ENCODE measurements at regions of chr11 and their contacts with region 1.

Region 1: DNA sequence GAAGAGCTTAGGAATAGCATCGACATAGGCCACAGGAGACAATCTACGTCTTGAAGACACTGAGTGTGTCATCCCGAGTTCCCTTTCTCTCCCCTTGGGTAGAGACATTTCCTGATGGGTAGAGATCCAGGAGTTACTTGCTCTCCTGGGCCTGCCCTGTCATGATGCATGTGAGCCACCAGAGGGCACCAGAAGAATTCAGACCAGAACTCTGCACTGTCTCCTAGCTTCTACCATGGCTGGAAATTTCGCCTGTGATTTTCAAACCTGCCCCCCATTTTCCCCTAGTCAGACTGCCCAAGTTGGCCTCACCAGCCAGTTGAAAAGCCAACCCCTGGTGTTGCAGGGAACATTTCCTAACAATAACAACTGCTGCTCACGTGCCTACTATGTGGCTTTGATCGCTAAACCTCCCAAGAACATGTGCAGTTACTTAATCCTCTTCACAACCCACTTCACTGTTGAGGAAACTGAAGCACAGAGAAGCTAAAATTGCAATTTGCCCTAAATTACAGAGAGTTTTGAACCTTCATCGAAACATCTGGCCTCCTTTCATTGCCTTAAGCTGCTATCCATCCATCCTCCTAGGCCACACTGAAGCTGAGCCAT is 47.2 kb downstream of the C11orf58 start:
- DNase-seq: peak; percentile 65
- ATAC-seq: peak; percentile 81
- H3K4me3 ChIP-seq: no peak overlapping the region
- H3K4me3 Mint-ChIP-seq: no peak overlapping the region
- H3K27ac ChIP-seq: no peak overlapping the region
- H3K27ac Mint-ChIP-seq: no peak overlapping the region
- H3K4me1 ChIP-seq: no peaks in the 10 kb centered on the region
- H3K4me1 Mint-ChIP-seq: no peaks in the 10 kb centered on the region
- H3K27me3 ChIP-seq: no peaks in the 10 kb centered on the region
- H3K27me3 Mint-ChIP-seq: no peaks in the 10 kb centered on the region
- CTCF ChIP-seq: peak; percentile 89

Region 2: GRCh38 chr11:16767137-16767536 is 18.5 kb before region 1 on chr11:
- CTCF ChIA-PET with region 1: interaction called, 11 read pairs
- POLR2A ChIA-PET with region 1: no interaction called
- intact Hi-C with region 1: no loop called
- DNase-seq: no peak
- ATAC-seq: no peak
- H3K4me3 ChIP-seq: no peak overlapping the region
- H3K4me3 Mint-ChIP-seq: no peak overlapping the region
- H3K27ac ChIP-seq: no peak overlapping the region
- H3K27ac Mint-ChIP-seq: no peak overlapping the region
- H3K4me1 ChIP-seq: no peaks in the 10 kb centered on the region
- H3K4me1 Mint-ChIP-seq: no peaks in the 10 kb centered on the region
- H3K27me3 ChIP-seq: no peaks in the 10 kb centered on the region
- H3K27me3 Mint-ChIP-seq: peaks cover 7% of the 10 kb centered on the region
- CTCF ChIP-seq: no peak

Region 3: DNA sequence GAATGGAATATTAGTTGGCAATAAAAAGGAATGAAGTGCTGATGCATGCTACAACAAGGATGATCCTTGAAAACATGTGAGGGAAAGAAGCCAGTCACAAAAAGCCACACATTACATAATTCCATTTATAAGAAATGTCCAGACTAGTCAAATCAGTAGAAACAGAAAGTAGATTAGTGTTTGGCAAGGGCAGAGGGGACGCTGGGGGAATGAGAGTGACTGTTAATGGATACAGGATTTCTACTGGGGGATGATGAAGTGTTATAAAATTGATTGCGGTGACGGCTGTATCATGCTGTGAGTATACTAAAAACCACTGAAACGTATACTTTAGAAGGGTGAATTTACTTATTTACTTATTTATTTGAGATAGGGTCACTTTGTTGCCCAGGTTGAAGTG is 10.7 kb after region 1 on chr11:
- CTCF ChIA-PET with region 1: interaction called, 19 read pairs
- POLR2A ChIA-PET with region 1: no interaction called
- intact Hi-C with region 1: no loop called
- DNase-seq: no peak
- ATAC-seq: no peak
- H3K4me3 ChIP-seq: no peak overlapping the region
- H3K4me3 Mint-ChIP-seq: no peak overlapping the region
- H3K27ac ChIP-seq: no peak overlapping the region
- H3K27ac Mint-ChIP-seq: no peak overlapping the region
- H3K4me1 ChIP-seq: no peaks in the 10 kb centered on the region
- H3K4me1 Mint-ChIP-seq: no peaks in the 10 kb centered on the region
- H3K27me3 ChIP-seq: no peaks in the 10 kb centered on the region
- H3K27me3 Mint-ChIP-seq: no peaks in the 10 kb centered on the region
- CTCF ChIP-seq: no peak

Measured in B cell (primary cell).